ENCODE measurements at regions of chr19 and their contacts with region 1.

Region 1: GRCh38 chr19:44113138-44113783 is at the start of gene ZNF225:
- DNase-seq: peak; percentile 91 to 97
- H3K4me3 ChIP-seq: peak within 1 kb of the TSS; percentile 80
- H3K27ac ChIP-seq: no peak within 1 kb of the TSS
- H3K4me1 ChIP-seq: peaks cover 14% of the 10 kb centered on the region; the same call in 1 of the 2 replicates
- H3K27me3 ChIP-seq: no peaks in the 10 kb centered on the region
- CTCF ChIP-seq: no peak
- total RNA-seq, gene ZNF225: 3.5 and 5.4 TPM in 2 replicates

Region 2: DNA sequence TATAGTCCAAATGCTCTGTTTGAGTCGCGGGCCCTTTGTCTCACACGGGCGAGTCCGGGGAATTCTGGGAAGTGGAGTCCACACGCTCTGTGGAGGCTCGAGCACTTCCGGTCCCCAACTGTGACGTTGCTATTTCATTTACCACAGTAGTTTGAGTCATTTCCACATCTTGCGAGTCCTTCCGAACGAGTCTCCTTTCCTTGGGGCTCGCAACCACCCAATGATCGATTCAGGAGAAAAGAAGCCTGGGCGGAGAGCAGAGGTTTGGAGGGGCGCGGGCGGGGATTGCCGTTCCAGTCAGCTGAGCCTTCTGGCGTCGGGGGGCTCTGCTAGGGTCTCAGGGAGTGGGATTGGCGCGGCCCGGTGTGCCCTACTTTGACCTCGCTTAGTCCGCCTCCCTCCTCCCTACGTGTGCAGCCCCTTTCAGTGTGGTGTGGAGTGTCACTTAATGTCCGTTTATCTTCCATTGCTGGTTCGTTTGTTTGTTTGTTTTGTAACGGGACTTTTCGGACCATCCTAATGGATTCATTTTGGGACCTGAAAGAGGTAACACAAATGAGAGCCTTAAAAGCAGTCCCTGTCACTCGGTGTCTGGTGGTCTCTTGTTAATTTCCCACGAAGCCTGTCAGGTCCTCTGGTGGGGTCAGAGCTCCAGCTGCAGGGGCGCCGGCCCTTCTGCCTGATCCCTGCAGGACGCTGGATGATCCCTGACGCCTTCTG is 87.9 kb before region 1 on chr19 and contains the start of gene ZNF222:
- CTCF ChIA-PET with region 1: no interaction called
- POLR2A ChIA-PET with region 1: no interaction called
- intact Hi-C with region 1: loop called (anchors 1 kb)
- DNase-seq: peak; percentile 62 to 77
- H3K4me3 ChIP-seq: peak within 1 kb of the TSS; percentile 84
- H3K27ac ChIP-seq: no peak within 1 kb of the TSS
- H3K4me1 ChIP-seq: peaks cover 13% of the 10 kb centered on the region
- H3K27me3 ChIP-seq: no peaks in the 10 kb centered on the region
- CTCF ChIP-seq: no peak
- total RNA-seq, gene ZNF222: 1.8 and 2.1 TPM in 2 replicates

Region 3: DNA sequence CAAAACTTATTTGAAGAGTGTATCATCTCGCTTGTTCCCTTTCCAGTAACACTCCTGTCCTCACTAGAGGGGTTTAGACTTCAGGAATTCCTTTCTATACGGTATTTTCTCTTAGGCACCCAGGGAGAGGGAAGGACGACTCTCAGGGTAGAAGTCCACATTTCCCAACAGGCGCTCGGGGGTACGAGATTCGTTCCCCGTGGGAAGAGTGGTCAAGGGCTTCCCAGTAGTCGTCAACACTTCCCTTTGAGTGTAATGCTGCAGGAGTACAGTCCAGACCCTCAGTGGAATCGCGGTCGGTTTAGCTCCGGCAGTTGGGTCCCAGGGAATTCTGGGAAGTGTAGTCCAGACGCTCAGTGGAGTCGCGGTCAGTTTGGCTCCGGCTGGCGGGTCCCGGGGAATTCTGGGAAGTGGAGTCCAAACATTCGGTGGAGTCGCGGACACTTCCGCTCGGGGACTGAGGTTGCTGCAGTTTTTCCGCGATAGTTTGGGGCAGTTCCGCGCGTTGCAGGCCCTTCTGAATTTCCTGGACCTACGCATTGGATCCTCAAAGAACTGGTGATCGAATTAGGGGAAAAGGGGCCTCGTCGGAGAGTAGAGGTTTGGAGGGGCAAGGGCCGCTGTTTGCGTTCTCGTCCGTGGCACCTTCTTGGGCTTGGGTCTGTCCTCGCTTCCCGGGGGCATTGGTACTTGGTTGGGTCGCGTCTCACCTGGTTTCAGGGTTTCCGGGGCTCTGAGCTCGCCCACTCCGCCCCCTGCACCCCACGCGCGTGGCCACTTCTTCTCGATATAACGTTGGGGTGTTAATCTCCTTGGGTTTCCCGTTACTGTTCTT is 19.1 kb before region 1 on chr19 and contains the start of gene ZNF224:
- CTCF ChIA-PET with region 1: no interaction called
- POLR2A ChIA-PET with region 1: no interaction called
- intact Hi-C with region 1: loop called (anchors 1 kb)
- DNase-seq: peak; percentile 85
- H3K4me3 ChIP-seq: peak within 1 kb of the TSS; percentile 65
- H3K27ac ChIP-seq: peak within 1 kb of the TSS; percentile 10; the same call in 1 of the 2 replicates
- H3K4me1 ChIP-seq: peaks cover 19% of the 10 kb centered on the region
- H3K27me3 ChIP-seq: no peaks in the 10 kb centered on the region
- CTCF ChIP-seq: no peak
- total RNA-seq, gene ZNF224: 29.3 and 30.9 TPM in 2 replicates

Region 4: DNA sequence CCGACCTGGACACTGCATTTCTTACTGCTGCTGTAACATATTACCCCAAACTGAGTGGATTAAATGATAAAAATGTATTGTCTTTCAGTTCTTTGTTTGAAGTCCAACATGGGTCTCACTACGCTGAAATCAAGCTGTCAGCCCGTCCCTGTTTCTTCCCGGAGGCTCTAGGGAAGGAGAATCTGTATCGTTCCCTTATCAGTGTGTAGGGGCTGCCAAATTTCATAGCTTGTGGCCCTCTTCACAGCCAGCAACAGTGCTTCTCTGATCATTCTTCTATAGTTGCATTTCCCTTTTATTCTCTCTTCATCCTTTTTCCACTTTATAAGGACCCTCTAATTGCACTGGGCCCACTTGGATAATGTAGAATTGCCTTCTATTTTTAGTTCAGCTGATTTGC is 38.2 kb after region 1 on chr19:
- CTCF ChIA-PET with region 1: no interaction called
- POLR2A ChIA-PET with region 1: no interaction called
- intact Hi-C with region 1: no loop called
- DNase-seq: no peak
- H3K4me3 ChIP-seq: no peak overlapping the region
- H3K27ac ChIP-seq: no peak overlapping the region
- H3K4me1 ChIP-seq: no peaks in the 10 kb centered on the region
- H3K27me3 ChIP-seq: no peaks in the 10 kb centered on the region
- CTCF ChIP-seq: no peak

Region 5: GRCh38 chr19:44207126-44207803 is 94.0 kb after region 1 on chr19:
- CTCF ChIA-PET with region 1: no interaction called
- POLR2A ChIA-PET with region 1: interaction called, 4 read pairs
- intact Hi-C with region 1: loop called (anchors 5 kb)
- DNase-seq: peak; percentile 86 to 90
- H3K4me3 ChIP-seq: peak overlapping the region; percentile 85
- H3K27ac ChIP-seq: no peak overlapping the region
- H3K4me1 ChIP-seq: peaks cover 7% of the 10 kb centered on the region
- H3K27me3 ChIP-seq: no peaks in the 10 kb centered on the region
- CTCF ChIP-seq: no peak